CD8-positive, alpha-beta T cell (primary cell): ENCODE measurements at regions of chr2 and their contacts with region 1.

Region 1: GRCh38 chr2:636641-637405 is 40.4 kb downstream of the TMEM18 start:
- DNase-seq: peak; percentile 12 to 78 (median 60)
- ATAC-seq: peak; percentile 68
- H3K4me3 ChIP-seq: peak overlapping the region; percentile 59 to 63
- H3K4me3 Mint-ChIP-seq: peak overlapping the region; percentile 82
- H3K27ac ChIP-seq: peak overlapping the region in 1 of 2 experiments; percentile 8
- H3K27ac Mint-ChIP-seq: peak overlapping the region; percentile 64
- H3K4me1 ChIP-seq: no peaks in the 10 kb centered on the region
- H3K4me1 Mint-ChIP-seq: peaks cover 6% of the 10 kb centered on the region
- H3K27me3 ChIP-seq: peaks cover 0 to 4% of the 10 kb centered on the region in 2 experiments
- H3K27me3 Mint-ChIP-seq: peaks cover 2% of the 10 kb centered on the region
- CTCF ChIP-seq: peak; percentile 98

Region 2: GRCh38 chr2:246489-247144 is 390.2 kb before region 1 on chr2:
- CTCF ChIA-PET with region 1: interaction called, 10 read pairs
- POLR2A ChIA-PET with region 1: no interaction called
- intact Hi-C with region 1: loop called (anchors 1 kb)
- DNase-seq: peak in 3 of 9 experiments; percentile 32 to 73 (median 63)
- ATAC-seq: peak; percentile 38
- H3K4me3 ChIP-seq: no peak overlapping the region
- H3K4me3 Mint-ChIP-seq: no peak overlapping the region
- H3K27ac ChIP-seq: no peak overlapping the region
- H3K27ac Mint-ChIP-seq: no peak overlapping the region
- H3K4me1 ChIP-seq: peaks cover 3% of the 10 kb centered on the region
- H3K4me1 Mint-ChIP-seq: peaks cover 6% of the 10 kb centered on the region
- H3K27me3 ChIP-seq: no peaks in the 10 kb centered on the region
- H3K27me3 Mint-ChIP-seq: no peaks in the 10 kb centered on the region
- CTCF ChIP-seq: peak; percentile 60

Region 3: GRCh38 chr2:332597-332996 is 304.2 kb before region 1 on chr2:
- CTCF ChIA-PET with region 1: no interaction called
- POLR2A ChIA-PET with region 1: no interaction called
- intact Hi-C with region 1: loop called (anchors 1 to 5 kb)
- DNase-seq: no peak
- ATAC-seq: no peak
- H3K4me3 ChIP-seq: no peak overlapping the region
- H3K4me3 Mint-ChIP-seq: no peak overlapping the region
- H3K27ac ChIP-seq: no peak overlapping the region
- H3K27ac Mint-ChIP-seq: no peak overlapping the region
- H3K4me1 ChIP-seq: no peaks in the 10 kb centered on the region
- H3K4me1 Mint-ChIP-seq: peaks cover 2% of the 10 kb centered on the region
- H3K27me3 ChIP-seq: no peaks in the 10 kb centered on the region
- H3K27me3 Mint-ChIP-seq: peaks cover 13% of the 10 kb centered on the region
- CTCF ChIP-seq: no peak

Region 4: DNA sequence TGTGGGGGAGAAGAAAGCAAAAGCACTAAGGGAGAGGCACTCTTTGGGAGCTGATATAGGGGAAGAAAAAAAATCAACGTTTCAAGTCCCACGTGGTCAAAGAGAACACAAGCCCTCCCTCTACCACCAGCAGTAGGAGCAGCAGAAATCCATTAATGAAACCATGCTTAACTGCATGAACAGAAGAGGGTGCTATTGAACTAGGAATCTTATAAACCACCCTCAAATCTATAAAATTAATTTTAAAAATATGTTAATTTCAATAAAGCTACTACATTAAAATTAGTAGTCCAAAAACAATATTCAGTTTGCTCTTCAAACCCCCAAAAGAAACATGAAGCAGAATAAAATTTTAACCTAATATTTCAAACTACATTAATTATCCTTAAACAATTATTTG is 107.4 kb before region 1 on chr2:
- CTCF ChIA-PET with region 1: interaction called, 33 read pairs
- POLR2A ChIA-PET with region 1: no interaction called
- intact Hi-C with region 1: loop called (anchors 1 kb)
- DNase-seq: peak in 2 of 9 experiments; percentile 50 to 66
- ATAC-seq: peak; percentile 66
- H3K4me3 ChIP-seq: no peak overlapping the region
- H3K4me3 Mint-ChIP-seq: no peak overlapping the region
- H3K27ac ChIP-seq: no peak overlapping the region
- H3K27ac Mint-ChIP-seq: no peak overlapping the region
- H3K4me1 ChIP-seq: no peaks in the 10 kb centered on the region
- H3K4me1 Mint-ChIP-seq: peaks cover 3% of the 10 kb centered on the region
- H3K27me3 ChIP-seq: peaks cover 0 to 13% of the 10 kb centered on the region in 2 experiments
- H3K27me3 Mint-ChIP-seq: peaks cover 6% of the 10 kb centered on the region
- CTCF ChIP-seq: peak; percentile 68

Region 5: GRCh38 chr2:677056-677965 is 40.5 kb after region 1 on chr2 and contains the start of gene TMEM18:
- CTCF ChIA-PET with region 1: interaction called, 3 read pairs
- POLR2A ChIA-PET with region 1: no interaction called
- intact Hi-C with region 1: loop called in 1 of 2 experiments (anchors 2 kb)
- DNase-seq: peak in 7 of 9 experiments; percentile 80 to 99 (median 98)
- ATAC-seq: peak; percentile 82
- H3K4me3 ChIP-seq: peak within 1 kb of the TSS; percentile 90 to 95
- H3K4me3 Mint-ChIP-seq: peak within 1 kb of the TSS; percentile 95
- H3K27ac ChIP-seq: peak within 1 kb of the TSS; percentile 96 to 100
- H3K27ac Mint-ChIP-seq: peak within 1 kb of the TSS; percentile 99
- H3K4me1 ChIP-seq: peaks cover 19% of the 10 kb centered on the region
- H3K4me1 Mint-ChIP-seq: peaks cover 42% of the 10 kb centered on the region
- H3K27me3 ChIP-seq: no peaks in the 10 kb centered on the region
- H3K27me3 Mint-ChIP-seq: no peaks in the 10 kb centered on the region
- CTCF ChIP-seq: peak; percentile 38
- total RNA-seq, gene TMEM18: 30.7 to 33.6 TPM